ENCODE measurements at regions of chr11 and their contacts with region 1.

Region 1: GRCh38 chr11:18395735-18396504 is 1.6 kb downstream of the LDHA start:
- DNase-seq: peak; percentile 91 to 98
- H3K4me3 ChIP-seq: peak overlapping the region; percentile 85 to 99
- H3K27ac ChIP-seq: peak overlapping the region; percentile 94 to 98
- H3K4me1 ChIP-seq: peaks cover 5 to 18% of the 10 kb centered on the region in 2 donors
- H3K27me3 ChIP-seq: no peaks in the 10 kb centered on the region
- CTCF ChIP-seq: no peak

Region 2: DNA sequence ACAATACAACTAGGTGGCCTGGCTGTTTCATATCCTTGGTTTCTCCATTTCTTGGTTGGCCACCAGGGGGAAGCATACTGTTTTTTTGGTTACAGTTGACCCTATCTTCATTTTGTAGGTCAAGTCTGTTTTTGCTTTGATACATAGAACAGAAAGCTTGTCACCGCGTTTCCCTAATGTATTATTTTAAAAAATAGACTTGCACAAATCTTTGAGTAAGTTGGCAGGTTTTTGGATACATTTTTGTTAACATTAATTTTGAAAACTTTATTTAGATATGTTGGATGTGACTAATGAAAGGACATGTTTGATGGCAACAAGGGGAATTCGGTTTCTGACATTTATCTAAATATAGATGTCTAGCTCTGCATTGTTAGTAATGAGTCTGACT is 1041.3 kb before region 1 on chr11:
- intact Hi-C with region 1: loop called (anchors 10 kb)
- DNase-seq: peak in 1 of 2 donors; percentile 86
- H3K4me3 ChIP-seq: peak overlapping the region in 1 of 2 donors; percentile 98
- H3K27ac ChIP-seq: no peak overlapping the region
- H3K4me1 ChIP-seq: peaks cover 0 to 7% of the 10 kb centered on the region in 2 donors
- H3K27me3 ChIP-seq: no peaks in the 10 kb centered on the region
- CTCF ChIP-seq: peak; percentile 39 to 57 (median 53)

Region 3: GRCh38 chr11:18310800-18311340 is 85.0 kb before region 1 on chr11:
- intact Hi-C with region 1: loop called (anchors 2 kb)
- DNase-seq: no peak
- H3K4me3 ChIP-seq: no peak overlapping the region
- H3K27ac ChIP-seq: peak overlapping the region; percentile 86 to 90
- H3K4me1 ChIP-seq: peaks cover 13 to 40% of the 10 kb centered on the region in 2 donors
- H3K27me3 ChIP-seq: no peaks in the 10 kb centered on the region
- CTCF ChIP-seq: no peak

Region 4: GRCh38 chr11:18383388-18384156 is 12.3 kb before region 1 on chr11:
- intact Hi-C with region 1: loop called (anchors 1 kb)
- DNase-seq: peak; percentile 88 to 98
- H3K4me3 ChIP-seq: peak overlapping the region in 1 of 2 donors; percentile 30
- H3K27ac ChIP-seq: peak overlapping the region; percentile 95 to 96
- H3K4me1 ChIP-seq: peaks cover 15 to 28% of the 10 kb centered on the region in 2 donors
- H3K27me3 ChIP-seq: no peaks in the 10 kb centered on the region
- CTCF ChIP-seq: no peak

Region 5: GRCh38 chr11:18588297-18589252 is 192.7 kb after region 1 on chr11 and contains the start of gene UEVLD:
- intact Hi-C with region 1: loop called (anchors 5 kb)
- DNase-seq: peak; percentile 33 to 94
- H3K4me3 ChIP-seq: peak within 1 kb of the TSS; percentile 69 to 97
- H3K27ac ChIP-seq: peak within 1 kb of the TSS; percentile 75 to 90
- H3K4me1 ChIP-seq: peaks cover 8 to 21% of the 10 kb centered on the region in 2 donors
- H3K27me3 ChIP-seq: no peaks in the 10 kb centered on the region
- CTCF ChIP-seq: no peak
- total RNA-seq, gene UEVLD: 10.1 TPM